Prostate gland (tissue), 2 donors: ENCODE measurements at regions of chr17 and their contacts with region 1.

Region 1: DNA sequence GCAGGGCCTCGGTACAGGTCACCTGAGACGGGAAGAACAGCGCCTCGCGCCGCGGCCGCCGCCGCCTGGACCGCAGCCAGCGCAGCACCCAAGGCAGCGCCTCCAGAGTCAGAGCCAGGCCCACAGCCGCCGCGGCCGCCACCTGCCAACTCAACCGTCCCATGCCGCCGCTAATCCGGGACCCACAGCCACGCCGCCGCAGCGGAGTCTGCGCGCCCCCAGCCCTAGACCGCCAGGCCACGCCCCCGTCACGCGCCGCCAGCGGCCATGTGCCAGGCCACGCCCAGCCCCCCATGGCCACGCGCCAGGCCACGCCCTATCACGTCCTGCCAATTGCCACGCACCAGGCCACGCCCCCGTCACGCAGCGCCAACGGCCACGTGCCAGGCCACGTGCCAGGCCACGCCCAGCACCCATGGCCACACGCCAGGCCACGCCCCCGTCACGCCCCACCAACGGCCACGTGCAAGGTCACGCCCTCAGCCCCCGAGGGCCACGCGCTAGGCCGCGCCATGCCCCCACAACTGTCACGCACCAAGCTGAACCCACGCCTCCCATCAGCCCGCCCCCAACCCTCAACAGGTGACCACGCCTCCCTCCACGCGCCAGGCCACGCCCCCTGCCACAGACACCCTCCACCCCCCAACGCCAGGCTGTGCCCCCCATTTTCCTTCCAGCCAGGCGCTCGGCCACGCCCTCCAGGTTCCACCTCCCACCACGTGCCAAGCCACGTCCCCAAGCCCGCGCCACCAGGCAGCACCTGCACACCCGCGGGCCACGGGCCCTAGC is at the start of gene PLD6:
- DNase-seq: peak; percentile 74
- H3K4me3 ChIP-seq: peak within 1 kb of the TSS; percentile 42 to 45
- H3K27ac ChIP-seq: peak within 1 kb of the TSS; percentile 86 to 90
- H3K4me1 ChIP-seq: peaks cover 16% of the 10 kb centered on the region
- H3K27me3 ChIP-seq: no peaks in the 10 kb centered on the region
- CTCF ChIP-seq: peak in 1 of 4 experiments; percentile 5
- POLR2A ChIP-seq: peak; percentile 30
- total RNA-seq, gene PLD6: 9.5 to 26.4 TPM

Region 2: GRCh38 chr17:17151962-17152361 is 54.4 kb before region 1 on chr17:
- intact Hi-C with region 1: loop called (anchors 5 kb)
- DNase-seq: peak; percentile 71
- H3K4me3 ChIP-seq: no peak overlapping the region
- H3K27ac ChIP-seq: peak overlapping the region; percentile 18 to 38
- H3K4me1 ChIP-seq: no peaks in the 10 kb centered on the region
- H3K27me3 ChIP-seq: no peaks in the 10 kb centered on the region
- CTCF ChIP-seq: no peak
- POLR2A ChIP-seq: no peak